GM18951 (cell line): ENCODE measurements at regions of chr6 and their contacts with region 1.

Region 1: GRCh38 chr6:154164397-154165165 is 125.5 kb downstream of the OPRM1 start:
- POLR2A ChIP-seq: no peak

Region 2: GRCh38 chr6:153553627-153554026 is 611.0 kb before region 1 on chr6:
- in situ Hi-C with region 1: no loop called
- POLR2A ChIP-seq: no peak

Region 3: DNA sequence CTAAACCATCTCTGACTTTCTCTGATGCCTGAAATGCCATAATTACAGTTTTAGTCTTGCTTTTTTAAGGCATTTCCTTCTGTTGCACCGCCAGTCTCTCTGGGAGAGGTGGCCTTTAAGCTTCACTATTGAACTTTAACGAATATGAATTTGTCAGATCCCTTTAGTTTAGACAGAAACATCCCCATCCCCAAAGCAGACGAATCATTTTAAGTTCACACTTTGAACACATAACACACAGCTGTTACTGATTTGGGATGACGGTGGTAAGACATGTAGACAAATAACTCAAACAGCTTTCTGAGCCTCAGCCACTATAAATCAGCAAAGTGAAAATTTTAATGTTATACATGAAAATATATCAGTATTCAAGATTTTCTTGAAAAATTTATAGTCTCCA is 199.2 kb after region 1 on chr6:
- in situ Hi-C with region 1: loop called (anchors 5 kb)
- POLR2A ChIP-seq: no peak